Activated CD4-positive, alpha-beta T cell treated with anti-CD3 and anti-CD28 coated beads, Interleukin-2, amount 10 ng/mL, durations not matched to agents 24 days and 14 days (primary cell): ENCODE measurements at regions of chr10 and their contacts with region 1.

Region 1: GRCh38 chr10:95308389-95309302 is 17.8 kb upstream of the PDLIM1 start:
- DNase-seq: no peak
- H3K4me3 Mint-ChIP-seq: no peak overlapping the region
- H3K27ac Mint-ChIP-seq: no peak overlapping the region
- H3K4me1 Mint-ChIP-seq: peaks cover 15% of the 10 kb centered on the region
- H3K27me3 Mint-ChIP-seq: peaks cover 15% of the 10 kb centered on the region

Region 2: DNA sequence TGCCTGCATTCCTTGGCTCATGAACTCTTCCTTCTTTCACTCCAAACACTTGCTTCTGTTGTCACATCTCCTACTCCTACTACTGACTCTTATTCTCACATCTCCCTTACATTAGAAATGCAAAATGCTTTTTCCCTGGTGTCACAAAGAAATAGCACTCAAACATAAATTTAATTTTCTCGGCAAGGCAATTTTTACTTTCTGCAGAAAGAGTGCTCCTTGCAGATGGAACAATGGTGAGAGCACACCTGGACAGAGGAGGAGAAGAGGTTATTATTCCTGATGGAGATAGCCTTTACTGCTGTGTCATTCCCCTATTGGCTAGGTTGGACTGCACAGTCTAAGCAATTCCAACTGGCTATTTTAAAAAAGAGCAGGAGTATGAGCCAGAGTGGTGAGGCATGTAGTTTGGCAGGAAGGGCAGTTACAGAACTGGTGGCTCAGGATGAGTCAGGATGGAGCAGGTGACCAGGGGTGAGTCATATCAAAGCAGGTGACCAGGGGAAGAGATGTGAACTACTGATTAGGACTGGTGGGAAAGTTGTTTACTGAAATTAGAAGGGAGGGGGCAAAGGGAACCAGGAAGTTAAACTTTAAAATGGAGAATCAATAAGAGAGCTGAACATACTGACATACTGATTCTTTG is 317.3 kb before region 1 on chr10:
- intact Hi-C with region 1: no loop called
- DNase-seq: no peak
- H3K4me3 Mint-ChIP-seq: no peak overlapping the region
- H3K27ac Mint-ChIP-seq: no peak overlapping the region
- H3K4me1 Mint-ChIP-seq: no peaks in the 10 kb centered on the region
- H3K27me3 Mint-ChIP-seq: no peaks in the 10 kb centered on the region

Region 3: DNA sequence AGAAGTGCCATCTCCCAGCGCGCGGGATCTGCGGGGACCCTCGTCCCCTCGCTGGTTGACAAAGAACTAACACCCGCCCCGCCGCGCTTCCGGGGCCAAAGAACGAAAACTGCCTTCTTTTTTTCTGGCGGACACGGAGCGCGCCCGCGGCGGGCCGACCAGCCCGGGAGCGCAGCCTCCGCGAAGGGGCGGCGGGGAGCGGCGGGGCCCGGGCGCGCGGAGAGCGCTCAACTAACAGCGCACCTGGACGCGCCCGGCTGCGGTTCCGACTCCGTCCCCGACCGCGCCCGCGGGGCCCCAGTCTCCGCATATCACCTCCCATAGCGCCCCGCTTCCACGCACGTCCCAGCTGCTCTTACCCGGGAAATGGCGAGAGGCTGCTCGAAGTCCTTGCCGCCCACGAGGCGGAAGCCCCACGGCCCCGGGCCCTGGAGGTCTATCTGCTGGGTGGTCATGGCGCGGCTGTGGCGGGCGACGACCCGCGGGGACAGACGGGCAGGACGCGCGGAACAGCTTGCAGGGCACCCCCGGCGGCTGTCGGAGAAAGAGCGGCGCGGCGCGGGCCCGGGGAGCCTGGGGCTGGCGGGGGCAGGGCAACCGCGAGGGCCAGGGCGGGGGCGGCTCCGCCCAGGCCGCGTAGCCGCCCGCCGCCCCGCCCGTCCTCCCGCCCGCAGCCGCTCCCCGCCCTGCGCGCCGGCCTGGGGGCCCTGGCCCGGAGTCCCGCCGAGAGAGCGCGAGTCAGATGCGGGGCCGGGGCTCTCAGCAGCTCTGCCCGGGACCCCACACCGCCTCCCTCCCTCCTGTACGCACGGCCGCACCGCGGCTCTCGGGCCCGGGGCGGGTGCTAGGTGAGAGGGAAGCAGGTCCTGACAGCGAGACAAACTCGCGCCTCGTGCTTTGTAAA is 17.9 kb before region 1 on chr10 and contains the start of gene PDLIM1:
- intact Hi-C with region 1: loop called (anchors 2 kb)
- DNase-seq: peak; percentile 89
- H3K4me3 Mint-ChIP-seq: peak within 1 kb of the TSS; percentile 81
- H3K27ac Mint-ChIP-seq: peak within 1 kb of the TSS; percentile 71
- H3K4me1 Mint-ChIP-seq: peaks cover 31% of the 10 kb centered on the region
- H3K27me3 Mint-ChIP-seq: peaks cover 40% of the 10 kb centered on the region
- total RNA-seq, gene PDLIM1: 3.1 and 3.2 TPM in 2 replicates

Region 4: DNA sequence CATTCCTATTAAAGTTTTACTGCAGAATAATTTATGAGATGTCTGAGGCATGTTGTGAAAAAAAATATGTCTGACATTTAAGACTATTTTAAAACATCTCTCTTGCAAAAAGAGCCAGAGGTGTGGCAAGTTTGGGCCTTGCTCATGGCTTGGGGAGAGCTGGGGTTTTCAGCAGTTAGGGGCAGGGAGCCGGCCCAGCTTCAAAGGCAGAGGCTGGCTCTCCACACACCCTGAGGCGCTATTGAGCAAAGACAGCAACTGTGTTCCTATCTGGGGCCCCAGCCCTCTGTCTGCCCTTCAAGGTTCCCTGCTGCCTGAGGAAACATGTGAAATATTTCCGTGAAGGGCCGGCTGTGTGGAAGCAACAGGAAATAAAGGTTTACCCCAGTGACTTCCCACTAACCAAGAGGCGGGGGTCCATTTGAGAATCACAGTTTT is 158.5 kb after region 1 on chr10:
- intact Hi-C with region 1: no loop called
- DNase-seq: no peak
- H3K4me3 Mint-ChIP-seq: no peak overlapping the region
- H3K27ac Mint-ChIP-seq: no peak overlapping the region
- H3K4me1 Mint-ChIP-seq: no peaks in the 10 kb centered on the region
- H3K27me3 Mint-ChIP-seq: peaks cover 13% of the 10 kb centered on the region